ENCODE measurements at regions of chr22 and their contacts with region 1.

Region 1: DNA sequence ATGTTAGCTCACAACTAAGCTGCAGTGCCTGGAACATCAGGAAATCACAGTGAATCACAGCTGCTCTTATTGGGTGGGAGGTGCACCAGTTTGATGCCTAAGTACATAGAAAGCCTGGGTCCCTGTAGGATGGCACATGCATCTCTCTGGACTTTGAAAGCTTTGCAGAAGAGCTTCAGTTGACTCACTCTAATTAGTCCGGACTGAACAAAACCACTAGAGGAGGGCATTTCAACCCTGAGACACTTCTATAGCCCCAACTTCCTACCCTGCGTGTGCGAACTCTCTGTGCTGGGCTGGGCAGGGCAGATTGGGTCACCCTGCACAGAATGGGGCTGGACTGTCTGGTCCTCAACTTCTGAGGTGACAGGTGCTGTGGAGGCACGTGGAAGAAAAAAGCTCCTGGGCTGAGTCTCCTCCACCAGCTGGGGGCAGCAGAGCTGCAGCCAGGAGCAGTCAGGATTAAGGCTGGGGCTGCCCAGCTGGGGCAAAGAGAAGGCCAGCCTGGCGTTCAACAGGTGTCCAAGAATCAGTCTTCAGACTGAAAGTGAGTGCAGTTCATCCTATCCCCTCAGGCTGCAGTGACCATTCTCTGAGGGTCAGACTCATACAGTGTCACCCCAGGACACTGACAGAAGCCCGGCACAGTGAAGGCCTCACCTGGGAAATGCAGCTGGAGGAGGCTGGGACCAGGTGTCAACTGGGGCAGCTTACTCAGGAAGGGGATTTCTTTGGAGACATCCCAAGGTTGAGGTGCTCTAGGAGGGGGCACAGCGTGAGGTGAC is 22.1 kb downstream of the GGTLC2 start:
- DNase-seq: no peak
- H3K4me3 ChIP-seq: no peak overlapping the region
- H3K27ac ChIP-seq: no peak overlapping the region
- H3K27me3 ChIP-seq: peaks cover 22% of the 10 kb centered on the region
- CTCF ChIP-seq: peak; percentile 85

Region 2: DNA sequence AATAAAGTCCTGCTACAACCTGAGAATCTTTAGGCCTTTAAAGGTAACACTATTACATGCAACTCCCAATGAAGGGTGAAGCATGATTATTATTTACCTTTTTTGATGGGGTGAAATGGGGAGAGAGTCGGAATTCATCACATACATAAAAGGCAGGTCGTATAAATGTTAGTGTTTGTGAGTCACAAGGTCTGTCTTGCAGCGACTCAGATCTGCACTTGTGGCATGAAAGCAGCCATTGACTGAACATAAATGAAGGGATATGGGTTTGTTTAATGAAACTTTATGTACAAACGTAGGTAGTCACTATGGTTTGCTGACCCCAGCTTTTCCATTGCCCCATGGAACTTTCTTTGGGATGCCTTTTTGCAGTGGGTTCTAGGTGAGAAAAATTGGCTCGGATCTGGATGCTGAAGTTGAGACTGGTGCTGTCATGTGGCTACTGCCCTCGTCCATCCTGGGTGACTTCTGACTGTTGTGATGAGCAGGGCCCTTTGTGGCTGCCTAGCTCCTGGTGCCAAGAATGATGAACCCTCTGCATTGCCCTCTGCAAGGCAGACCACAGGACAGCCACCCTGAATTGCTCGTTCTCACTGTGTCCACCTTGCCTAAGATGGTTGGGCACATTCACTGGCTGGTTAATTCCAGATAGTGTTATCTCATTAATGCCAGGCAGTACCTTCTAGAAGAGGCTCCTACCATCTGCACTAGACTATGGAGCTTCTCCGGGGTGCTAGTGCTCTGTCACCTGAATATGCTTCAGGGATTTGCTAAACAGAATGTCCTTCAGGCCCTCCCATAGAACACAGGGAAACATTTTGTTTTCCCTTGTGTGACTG is 10.8 kb before region 1 on chr22:
- CTCF ChIA-PET with region 1: interaction called, 18 read pairs
- POLR2A ChIA-PET with region 1: no interaction called
- DNase-seq: no peak
- H3K4me3 ChIP-seq: no peak overlapping the region
- H3K27ac ChIP-seq: no peak overlapping the region
- H3K27me3 ChIP-seq: peaks cover 7% of the 10 kb centered on the region
- CTCF ChIP-seq: no peak

Region 3: DNA sequence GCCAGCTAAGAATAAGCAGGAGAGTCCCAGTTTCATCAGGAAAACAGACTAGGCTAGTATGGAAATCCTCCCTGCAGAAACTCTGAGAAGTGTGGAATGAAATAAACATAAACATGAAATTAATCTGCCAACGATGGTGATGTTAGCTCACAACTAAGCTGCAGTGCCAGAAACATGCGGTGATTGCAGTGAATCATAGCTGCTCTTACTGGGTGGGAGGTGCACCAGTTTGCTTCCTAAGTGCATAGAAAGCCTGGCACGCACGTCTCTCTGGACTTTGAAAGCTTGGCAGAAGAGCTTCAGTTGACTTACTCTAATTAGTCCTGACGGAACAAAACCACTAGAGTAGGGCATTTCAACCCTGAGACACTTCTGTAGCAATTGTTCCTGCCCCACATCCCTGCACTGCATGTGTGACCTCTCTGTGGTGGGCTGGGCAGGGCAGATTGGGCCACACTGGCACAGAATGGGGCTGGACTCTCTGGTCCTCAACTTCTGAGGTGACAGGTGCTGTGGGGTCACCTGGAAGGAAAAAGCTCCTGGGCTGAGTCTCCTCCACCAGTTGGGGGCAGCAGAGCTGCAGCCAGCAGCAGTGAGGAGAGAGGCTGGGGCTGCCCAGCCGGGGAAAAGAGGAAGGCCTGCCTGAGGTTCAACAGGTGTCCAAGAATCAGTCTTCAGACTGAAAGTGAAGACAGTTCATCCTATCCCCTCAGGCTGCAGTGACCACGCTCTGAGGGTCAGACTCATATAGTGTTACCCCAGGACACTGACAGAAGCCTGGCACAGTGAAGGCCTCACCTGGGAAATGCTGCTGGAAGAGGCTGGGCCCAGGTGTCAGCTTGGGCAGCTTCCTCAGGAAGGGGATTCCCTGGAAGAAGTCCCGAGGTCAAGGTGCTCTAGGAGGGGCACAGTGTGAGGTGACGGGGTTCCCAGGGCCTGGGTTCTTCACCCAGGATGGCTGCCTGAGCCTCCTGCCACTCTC is 18.4 kb after region 1 on chr22:
- CTCF ChIA-PET with region 1: interaction called, 24 read pairs
- POLR2A ChIA-PET with region 1: interaction called, 5 read pairs
- DNase-seq: peak; percentile 57
- H3K4me3 ChIP-seq: no peak overlapping the region
- H3K27ac ChIP-seq: peak overlapping the region; percentile 52
- H3K27me3 ChIP-seq: peaks cover 7% of the 10 kb centered on the region
- CTCF ChIP-seq: peak; percentile 46

Region 4: GRCh38 chr22:22692707-22693530 is 26.4 kb after region 1 on chr22:
- CTCF ChIA-PET with region 1: interaction called, 11 read pairs
- POLR2A ChIA-PET with region 1: no interaction called
- DNase-seq: no peak
- H3K4me3 ChIP-seq: no peak overlapping the region
- H3K27ac ChIP-seq: no peak overlapping the region
- H3K27me3 ChIP-seq: peaks cover 7% of the 10 kb centered on the region
- CTCF ChIP-seq: peak; percentile 44

Region 5: DNA sequence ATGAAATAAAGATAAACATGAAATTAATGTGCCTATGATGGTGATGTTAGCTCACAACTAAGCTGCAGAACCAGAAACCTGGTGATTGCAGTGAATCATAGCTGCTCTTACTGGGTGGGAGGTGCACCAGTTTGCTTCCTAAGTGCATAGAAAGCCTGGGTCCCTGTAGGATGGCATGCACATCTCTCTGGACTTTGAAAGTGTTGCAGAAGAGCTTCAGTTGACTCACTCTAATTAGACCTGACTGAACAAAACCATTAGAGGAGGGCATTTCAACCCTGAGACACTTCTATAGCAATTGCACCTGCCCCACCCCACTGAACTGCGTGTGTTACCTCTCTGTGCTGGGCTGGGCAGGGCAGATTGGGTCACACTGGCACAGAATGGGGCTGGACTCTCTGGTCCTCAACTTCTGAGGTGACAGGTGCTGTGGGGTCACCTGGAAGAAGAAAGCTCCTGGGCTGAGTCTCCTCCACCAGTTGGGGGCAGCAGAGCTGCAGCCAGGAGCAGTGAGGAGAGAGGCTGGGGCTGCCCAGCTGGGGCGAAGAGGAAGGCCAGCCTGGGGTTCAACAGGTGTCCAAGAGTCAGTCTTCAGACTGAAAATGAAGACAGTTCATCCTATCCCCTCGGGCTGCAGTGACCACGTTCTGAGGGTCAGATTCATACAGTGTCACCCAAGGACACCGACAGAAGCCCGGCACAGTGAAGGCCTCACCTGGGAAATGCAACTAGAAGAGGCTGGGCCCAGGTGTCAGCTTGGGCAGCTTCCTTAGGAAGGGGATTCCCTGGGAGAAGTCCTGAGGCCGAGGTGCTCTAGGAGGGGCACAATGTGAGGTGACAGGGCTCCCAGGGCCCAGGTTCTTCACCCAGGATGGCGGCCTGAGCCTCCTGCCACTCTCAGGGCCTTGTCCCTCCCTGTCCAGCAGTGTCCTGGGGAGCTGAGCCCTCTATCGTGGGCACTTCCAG is 36.0 kb after region 1 on chr22:
- CTCF ChIA-PET with region 1: interaction called, 10 read pairs
- POLR2A ChIA-PET with region 1: no interaction called
- DNase-seq: no peak
- H3K4me3 ChIP-seq: no peak overlapping the region
- H3K27ac ChIP-seq: no peak overlapping the region
- H3K27me3 ChIP-seq: no peaks in the 10 kb centered on the region
- CTCF ChIP-seq: 0 out of 2 replicates have a peak, but pooled peaks have one; percentile 9

Region 6: GRCh38 chr22:22710719-22711531 is 44.4 kb after region 1 on chr22:
- CTCF ChIA-PET with region 1: interaction called, 16 read pairs
- POLR2A ChIA-PET with region 1: no interaction called
- DNase-seq: no peak
- H3K4me3 ChIP-seq: no peak overlapping the region
- H3K27ac ChIP-seq: no peak overlapping the region
- H3K27me3 ChIP-seq: peaks cover 5% of the 10 kb centered on the region
- CTCF ChIP-seq: peak; percentile 86

Region 7: GRCh38 chr22:22748297-22748743 is 81.8 kb after region 1 on chr22:
- CTCF ChIA-PET with region 1: interaction called, 29 read pairs
- POLR2A ChIA-PET with region 1: no interaction called
- DNase-seq: peak; percentile 8
- H3K4me3 ChIP-seq: no peak overlapping the region
- H3K27ac ChIP-seq: no peak overlapping the region
- H3K27me3 ChIP-seq: peaks cover 4% of the 10 kb centered on the region
- CTCF ChIP-seq: peak; percentile 87

Region 8: GRCh38 chr22:23270212-23270733 is 603.8 kb after region 1 on chr22:
- CTCF ChIA-PET with region 1: no interaction called
- POLR2A ChIA-PET with region 1: no interaction called
- DNase-seq: no peak
- H3K4me3 ChIP-seq: no peak overlapping the region
- H3K27ac ChIP-seq: no peak overlapping the region
- H3K27me3 ChIP-seq: no peaks in the 10 kb centered on the region
- CTCF ChIP-seq: peak; percentile 42

Measured in AG04450 (cell line).